ENCODE measurements at regions of chr11 and their contacts with region 1.

Region 1: DNA sequence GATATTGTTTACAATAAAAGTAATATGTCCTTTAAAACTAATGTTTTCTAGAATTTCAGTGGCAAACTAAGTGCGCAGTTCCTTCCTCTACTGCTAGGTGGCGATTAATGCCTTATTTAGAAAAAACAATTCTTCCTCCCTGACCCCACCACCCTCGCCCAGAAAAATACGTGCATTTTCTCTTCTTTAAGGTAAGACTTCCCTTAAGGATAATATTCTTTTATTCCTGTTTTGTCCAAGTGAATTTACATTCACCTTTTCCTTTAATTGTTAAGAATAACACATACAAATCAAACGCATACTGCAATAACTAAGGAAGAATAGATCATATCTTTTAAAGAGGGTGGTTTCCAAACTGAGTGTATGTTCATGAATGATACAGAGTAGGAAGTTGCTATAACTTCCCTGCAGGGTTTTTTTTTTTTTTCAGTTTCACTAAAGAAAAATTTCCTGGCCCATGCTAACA is 17.0 kb upstream of the PSMA1 start:
- DNase-seq: peak; percentile 55
- ATAC-seq: peak; percentile 31; the same call in 1 of the 2 replicates
- H3K4me3 ChIP-seq: no peak overlapping the region
- H3K27ac ChIP-seq: no peak overlapping the region
- H3K4me1 ChIP-seq: no peaks in the 10 kb centered on the region
- H3K27me3 ChIP-seq: peaks cover 7% of the 10 kb centered on the region; the same call in 1 of the 2 replicates
- CTCF ChIP-seq: peak; percentile 80

Region 2: GRCh38 chr11:14643697-14644225 is 106.6 kb after region 1 on chr11 and contains the start of gene PDE3B:
- CTCF ChIA-PET with region 1: no interaction called
- POLR2A ChIA-PET with region 1: no interaction called
- intact Hi-C with region 1: loop called (anchors 5 kb)
- DNase-seq: peak; percentile 27
- ATAC-seq: peak; percentile 76
- H3K4me3 ChIP-seq: peak within 1 kb of the TSS; percentile 68
- H3K27ac ChIP-seq: no peak within 1 kb of the TSS
- H3K4me1 ChIP-seq: peaks cover 5% of the 10 kb centered on the region; the same call in 1 of the 2 replicates
- H3K27me3 ChIP-seq: peaks cover 73% of the 10 kb centered on the region
- CTCF ChIP-seq: no peak
- total RNA-seq, gene PDE3B: 0.11 TPM in 1 of 2 replicates, not detected in the other

Region 3: GRCh38 chr11:14773755-14774154 is 236.6 kb after region 1 on chr11:
- CTCF ChIA-PET with region 1: no interaction called
- POLR2A ChIA-PET with region 1: no interaction called
- intact Hi-C with region 1: loop called (anchors 5 kb)
- DNase-seq: no peak
- ATAC-seq: no peak
- H3K4me3 ChIP-seq: no peak overlapping the region
- H3K27ac ChIP-seq: no peak overlapping the region
- H3K4me1 ChIP-seq: no peaks in the 10 kb centered on the region
- H3K27me3 ChIP-seq: no peaks in the 10 kb centered on the region
- CTCF ChIP-seq: peak; percentile 31; the same call in 1 of the 2 replicates

Measured in PC-3 (cell line).